WTC11 (cell line): ENCODE measurements at regions of chr13 and their contacts with region 1.

Region 1: GRCh38 chr13:51167393-51168191 is 54.6 kb upstream of the FAM124A start:
- DNase-seq: no peak
- ATAC-seq: no peak
- H3K4me3 Mint-ChIP-seq: no peak overlapping the region
- H3K27ac Mint-ChIP-seq: peak overlapping the region; percentile 99
- H3K4me1 Mint-ChIP-seq: peaks cover 38% of the 10 kb centered on the region
- H3K27me3 Mint-ChIP-seq: no peaks in the 10 kb centered on the region; the same call in none of the 2 replicates
- CTCF ChIP-seq: no peak

Region 2: GRCh38 chr13:51154029-51154555 is 13.5 kb before region 1 on chr13:
- CTCF ChIA-PET with region 1: interaction called, 6 read pairs
- POLR2A ChIA-PET with region 1: interaction called, 11 read pairs
- DNase-seq: no peak
- ATAC-seq: no peak
- H3K4me3 Mint-ChIP-seq: no peak overlapping the region
- H3K27ac Mint-ChIP-seq: peak overlapping the region; percentile 2
- H3K4me1 Mint-ChIP-seq: peaks cover 79% of the 10 kb centered on the region
- H3K27me3 Mint-ChIP-seq: no peaks in the 10 kb centered on the region; the same call in 1 of the 2 replicates
- CTCF ChIP-seq: no peak